CD8-positive, alpha-beta T cell (primary cell): ENCODE measurements at regions of chr2 and their contacts with region 1.

Region 1: GRCh38 chr2:10043906-10044601 is 704 bp downstream of the KLF11 start:
- DNase-seq: peak; percentile 72 to 96 (median 94)
- ATAC-seq: peak; percentile 66
- H3K4me3 ChIP-seq: peak overlapping the region; percentile 40 to 47
- H3K4me3 Mint-ChIP-seq: peak overlapping the region; percentile 77
- H3K27ac ChIP-seq: peak overlapping the region; percentile 67 to 74
- H3K27ac Mint-ChIP-seq: peak overlapping the region; percentile 90
- H3K4me1 ChIP-seq: peaks cover 18% of the 10 kb centered on the region
- H3K4me1 Mint-ChIP-seq: peaks cover 21% of the 10 kb centered on the region
- H3K27me3 ChIP-seq: no peaks in the 10 kb centered on the region
- H3K27me3 Mint-ChIP-seq: no peaks in the 10 kb centered on the region
- CTCF ChIP-seq: no peak

Region 2: DNA sequence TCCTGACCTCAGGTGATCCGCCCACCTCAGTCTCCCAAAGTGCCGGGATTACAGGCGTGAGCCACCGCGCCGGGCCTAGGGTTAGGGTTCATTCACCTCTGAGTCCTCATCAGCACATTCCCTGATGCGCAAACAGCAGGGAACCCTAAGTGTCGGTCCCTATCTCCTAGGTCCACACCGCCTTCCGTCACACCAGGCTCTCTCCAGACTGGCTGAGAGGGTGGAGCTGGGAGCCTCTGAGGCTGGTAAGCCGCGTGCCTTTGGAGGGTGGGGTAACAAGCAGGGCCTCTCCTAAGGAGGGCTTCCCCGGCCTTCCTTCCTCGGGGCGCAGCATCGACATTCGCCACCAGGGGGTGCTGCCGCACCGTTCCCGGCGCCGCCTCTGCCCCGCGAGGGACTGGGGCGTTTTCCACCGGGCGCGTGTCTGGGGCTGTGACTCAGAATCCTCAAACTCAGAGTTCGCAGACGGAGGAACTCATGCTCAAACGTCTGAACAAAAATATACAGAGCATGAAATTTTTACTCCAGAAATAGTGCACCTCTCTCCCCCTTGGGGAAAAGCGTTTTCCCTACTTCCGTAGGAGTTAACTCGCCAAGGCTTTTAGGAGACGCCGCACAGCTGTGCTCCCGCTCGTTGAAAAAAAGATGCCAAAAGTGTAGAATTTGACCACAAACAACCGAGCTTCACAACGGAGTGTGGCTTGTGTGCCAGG is 901.3 kb before region 1 on chr2:
- CTCF ChIA-PET with region 1: no interaction called
- POLR2A ChIA-PET with region 1: no interaction called
- intact Hi-C with region 1: loop called (anchors 5 kb)
- DNase-seq: peak; percentile 57 to 88 (median 75)
- ATAC-seq: peak; percentile 95
- H3K4me3 ChIP-seq: peak overlapping the region in 1 of 2 experiments; percentile 8
- H3K4me3 Mint-ChIP-seq: peak overlapping the region; percentile 39
- H3K27ac ChIP-seq: no peak overlapping the region
- H3K27ac Mint-ChIP-seq: no peak overlapping the region
- H3K4me1 ChIP-seq: peaks cover 3% of the 10 kb centered on the region
- H3K4me1 Mint-ChIP-seq: peaks cover 6% of the 10 kb centered on the region
- H3K27me3 ChIP-seq: no peaks in the 10 kb centered on the region
- H3K27me3 Mint-ChIP-seq: peaks cover 21% of the 10 kb centered on the region
- CTCF ChIP-seq: peak; percentile 90

Region 3: DNA sequence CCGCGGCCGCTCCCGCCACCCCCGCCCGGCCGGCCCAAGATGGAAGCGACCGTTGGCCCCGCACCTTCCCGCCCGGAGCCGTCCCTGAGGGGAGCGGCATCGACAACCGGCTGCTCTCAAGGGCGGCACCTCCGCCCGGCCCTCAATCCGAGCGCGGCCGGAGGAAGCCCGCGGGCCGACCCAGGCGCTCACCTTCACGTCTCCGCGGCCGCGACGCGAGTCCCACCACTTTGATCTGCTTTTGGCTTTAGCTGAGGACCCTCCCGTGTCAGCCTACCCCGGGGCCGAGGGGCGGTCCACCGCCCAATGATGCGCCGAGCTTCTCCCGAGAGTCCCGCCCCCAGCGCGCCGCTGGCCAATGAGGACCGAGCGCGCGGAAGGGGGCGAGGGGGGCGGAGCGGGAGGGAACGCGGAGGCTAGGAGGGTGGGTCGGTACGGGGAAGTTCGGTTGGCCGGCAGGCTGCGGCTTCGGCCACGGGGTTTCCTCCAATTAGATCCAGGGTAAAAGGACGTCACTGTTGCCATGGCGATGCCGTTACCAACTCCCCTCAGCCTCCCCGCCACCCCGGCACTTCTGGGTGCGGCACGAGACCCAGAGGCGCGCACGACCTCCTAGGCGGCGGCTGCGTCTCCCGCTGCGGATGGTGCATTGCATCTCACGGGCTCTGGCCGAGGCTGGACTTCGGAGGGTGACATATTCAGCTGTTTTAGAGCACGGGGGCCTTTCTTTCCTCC is 413.1 kb before region 1 on chr2 and contains the start of gene YWHAQ:
- CTCF ChIA-PET with region 1: no interaction called
- POLR2A ChIA-PET with region 1: interaction called, 4 read pairs
- intact Hi-C with region 1: loop called (anchors 2 to 5 kb)
- DNase-seq: peak; percentile 95 to 100 (median 97)
- ATAC-seq: peak; percentile 90
- H3K4me3 ChIP-seq: peak within 1 kb of the TSS; percentile 90 to 93
- H3K4me3 Mint-ChIP-seq: peak within 1 kb of the TSS; percentile 93
- H3K27ac ChIP-seq: peak within 1 kb of the TSS; percentile 89 to 91
- H3K27ac Mint-ChIP-seq: peak within 1 kb of the TSS; percentile 94
- H3K4me1 ChIP-seq: peaks cover 37% of the 10 kb centered on the region
- H3K4me1 Mint-ChIP-seq: peaks cover 46% of the 10 kb centered on the region
- H3K27me3 ChIP-seq: no peaks in the 10 kb centered on the region
- H3K27me3 Mint-ChIP-seq: no peaks in the 10 kb centered on the region
- CTCF ChIP-seq: no peak
- total RNA-seq, gene YWHAQ: 115 to 123 TPM

Region 4: DNA sequence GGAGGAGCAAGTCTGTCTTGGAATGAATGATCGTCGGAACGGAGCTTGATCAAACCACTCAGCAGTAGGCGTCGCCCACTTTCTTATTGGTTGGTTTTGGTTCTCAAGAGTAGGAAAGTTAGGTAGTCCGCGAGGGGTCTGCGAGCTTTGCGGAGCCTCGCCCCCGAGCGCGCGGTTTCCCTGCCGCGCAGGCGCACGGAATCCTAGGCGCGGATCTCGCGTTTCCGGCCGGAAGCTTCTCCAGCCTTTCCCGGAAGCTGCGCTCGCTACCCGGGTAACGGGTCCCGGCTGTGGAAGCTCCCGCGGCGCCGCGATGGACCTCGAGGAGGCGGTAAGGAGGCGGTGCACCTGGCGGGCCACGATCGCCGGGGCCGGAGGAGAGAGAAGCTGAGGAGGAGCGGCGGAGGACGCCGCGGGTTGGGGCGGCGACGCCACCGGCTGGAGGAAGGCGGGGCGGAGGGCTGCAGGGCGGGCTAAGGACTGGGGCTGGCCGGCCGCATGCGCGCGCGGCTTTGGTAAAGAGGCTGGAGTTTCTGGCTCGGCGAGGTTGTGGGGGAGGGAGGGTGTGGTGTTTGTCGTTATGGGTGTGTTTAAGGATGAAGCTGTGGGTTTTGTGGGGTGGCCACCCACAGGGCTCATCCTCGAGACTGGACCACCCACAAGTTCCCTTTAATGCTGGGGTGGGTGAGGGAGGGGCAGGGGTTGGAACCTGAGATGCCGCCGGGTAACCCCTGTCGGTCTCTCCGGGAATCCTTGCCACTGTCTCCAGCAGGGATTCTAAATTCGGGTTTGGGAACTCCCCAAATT is 200.6 kb before region 1 on chr2 and contains the start of gene TAF1B:
- CTCF ChIA-PET with region 1: interaction called, 3 read pairs
- POLR2A ChIA-PET with region 1: interaction called, 5 read pairs
- intact Hi-C with region 1: loop called in 1 of 2 experiments (anchors 1 kb)
- DNase-seq: peak; percentile 53 to 93 (median 84)
- ATAC-seq: peak; percentile 84
- H3K4me3 ChIP-seq: peak within 1 kb of the TSS; percentile 71 to 74
- H3K4me3 Mint-ChIP-seq: peak within 1 kb of the TSS; percentile 93
- H3K27ac ChIP-seq: peak within 1 kb of the TSS; percentile 65 to 84
- H3K27ac Mint-ChIP-seq: peak within 1 kb of the TSS; percentile 90
- H3K4me1 ChIP-seq: peaks cover 20% of the 10 kb centered on the region
- H3K4me1 Mint-ChIP-seq: peaks cover 48% of the 10 kb centered on the region
- H3K27me3 ChIP-seq: no peaks in the 10 kb centered on the region
- H3K27me3 Mint-ChIP-seq: no peaks in the 10 kb centered on the region
- CTCF ChIP-seq: no peak
- total RNA-seq, gene TAF1B: 13.3 to 15.8 TPM

Region 5: DNA sequence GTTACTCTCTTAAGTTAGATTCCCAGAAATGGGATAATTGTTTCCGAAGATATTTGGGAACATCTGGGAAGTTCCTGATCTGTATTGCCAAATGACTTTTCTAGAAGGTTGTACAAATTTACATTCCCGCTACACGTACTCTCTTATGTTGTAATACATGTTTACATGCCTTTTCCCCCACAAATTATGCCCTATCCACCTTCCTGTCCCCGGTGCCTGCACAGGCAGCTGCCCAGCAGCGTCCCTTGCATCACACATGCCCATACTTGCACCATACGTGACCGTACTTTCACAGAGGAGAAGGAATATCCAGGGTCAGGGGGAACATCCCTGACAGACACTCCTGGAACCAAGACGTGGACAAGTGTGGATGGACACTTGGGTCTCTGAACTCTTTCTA is 24.9 kb before region 1 on chr2:
- CTCF ChIA-PET with region 1: interaction called, 34 read pairs
- POLR2A ChIA-PET with region 1: no interaction called
- intact Hi-C with region 1: no loop called
- DNase-seq: no peak
- ATAC-seq: no peak
- H3K4me3 ChIP-seq: no peak overlapping the region
- H3K4me3 Mint-ChIP-seq: no peak overlapping the region
- H3K27ac ChIP-seq: no peak overlapping the region
- H3K27ac Mint-ChIP-seq: no peak overlapping the region
- H3K4me1 ChIP-seq: no peaks in the 10 kb centered on the region
- H3K4me1 Mint-ChIP-seq: no peaks in the 10 kb centered on the region
- H3K27me3 ChIP-seq: no peaks in the 10 kb centered on the region
- H3K27me3 Mint-ChIP-seq: peaks cover 11% of the 10 kb centered on the region
- CTCF ChIP-seq: no peak

Region 6: DNA sequence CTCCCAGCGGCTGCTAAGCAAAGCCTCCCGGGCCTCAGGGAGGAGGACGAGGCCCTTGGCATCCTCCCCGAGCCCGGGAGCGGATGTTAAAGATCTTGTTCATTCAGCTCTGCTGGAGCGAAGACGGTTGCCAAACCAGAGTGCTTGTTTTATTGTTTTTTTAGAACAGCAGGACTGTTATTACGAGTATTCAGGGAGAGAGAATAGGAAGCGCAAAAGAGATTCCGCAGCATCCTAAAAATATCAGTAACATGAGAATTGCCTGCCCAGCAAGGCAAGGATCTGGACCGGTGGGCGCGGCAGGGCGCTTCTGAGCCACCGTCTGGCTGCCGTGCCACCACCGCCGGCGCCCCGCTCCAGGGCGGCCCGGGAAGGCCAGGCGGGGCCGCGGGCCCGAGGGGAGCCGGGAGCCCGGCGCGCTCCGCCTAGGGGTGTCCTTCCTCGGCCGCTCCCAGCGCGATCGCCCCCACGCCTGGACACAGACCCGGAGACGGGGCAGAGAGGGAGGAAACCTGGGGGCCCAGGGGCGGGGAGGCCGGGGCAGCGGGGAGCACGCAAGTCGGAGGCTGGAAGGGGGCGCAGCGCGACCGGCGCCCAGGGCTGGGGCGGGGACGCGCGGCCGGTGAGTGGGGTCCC is 35.3 kb after region 1 on chr2:
- CTCF ChIA-PET with region 1: interaction called, 3 read pairs
- POLR2A ChIA-PET with region 1: no interaction called
- intact Hi-C with region 1: loop called in 1 of 2 experiments (anchors 1 kb)
- DNase-seq: peak in 3 of 9 experiments; percentile 12 to 40 (median 31)
- ATAC-seq: peak; percentile 28
- H3K4me3 ChIP-seq: peak overlapping the region in 1 of 2 experiments; percentile 1
- H3K4me3 Mint-ChIP-seq: peak overlapping the region; percentile 84
- H3K27ac ChIP-seq: no peak overlapping the region
- H3K27ac Mint-ChIP-seq: no peak overlapping the region
- H3K4me1 ChIP-seq: peaks cover 22% of the 10 kb centered on the region
- H3K4me1 Mint-ChIP-seq: peaks cover 9% of the 10 kb centered on the region
- H3K27me3 ChIP-seq: peaks cover 21 to 34% of the 10 kb centered on the region in 2 experiments
- H3K27me3 Mint-ChIP-seq: peaks cover 69% of the 10 kb centered on the region
- CTCF ChIP-seq: no peak

Region 7: DNA sequence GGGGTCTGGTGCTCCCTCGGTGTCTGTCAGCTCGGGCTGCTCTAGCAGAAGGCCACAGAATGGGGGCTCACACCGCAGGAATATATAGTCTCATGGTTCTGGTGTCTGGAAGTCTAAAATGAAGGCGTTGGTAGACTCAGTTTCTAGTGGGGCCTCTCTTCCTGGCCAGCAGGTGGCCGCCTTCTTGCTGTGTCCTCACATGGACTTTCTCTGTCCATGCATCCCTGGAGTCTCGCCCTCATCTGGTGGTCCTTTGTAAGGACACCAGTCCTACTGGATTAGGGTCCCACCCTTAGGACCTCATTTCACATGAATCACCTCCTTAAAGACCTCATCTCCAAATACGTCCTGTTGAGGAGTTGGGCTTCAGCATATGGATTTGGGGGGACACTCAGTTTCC is 144.2 kb after region 1 on chr2:
- CTCF ChIA-PET with region 1: no interaction called
- POLR2A ChIA-PET with region 1: no interaction called
- intact Hi-C with region 1: no loop called
- DNase-seq: no peak
- ATAC-seq: no peak
- H3K4me3 ChIP-seq: no peak overlapping the region
- H3K4me3 Mint-ChIP-seq: no peak overlapping the region
- H3K27ac ChIP-seq: no peak overlapping the region
- H3K27ac Mint-ChIP-seq: no peak overlapping the region
- H3K4me1 ChIP-seq: no peaks in the 10 kb centered on the region
- H3K4me1 Mint-ChIP-seq: no peaks in the 10 kb centered on the region
- H3K27me3 ChIP-seq: no peaks in the 10 kb centered on the region
- H3K27me3 Mint-ChIP-seq: no peaks in the 10 kb centered on the region
- CTCF ChIP-seq: no peak

Region 8: GRCh38 chr2:10448208-10448645 is 404.2 kb after region 1 on chr2 and contains the start of gene ODC1:
- CTCF ChIA-PET with region 1: interaction called, 4 read pairs
- POLR2A ChIA-PET with region 1: interaction called, 4 read pairs
- intact Hi-C with region 1: loop called in 1 of 2 experiments (anchors 1 kb)
- DNase-seq: peak; percentile 96 to 100 (median 98)
- ATAC-seq: peak; percentile 81
- H3K4me3 ChIP-seq: peak within 1 kb of the TSS; percentile 61 to 83
- H3K4me3 Mint-ChIP-seq: peak within 1 kb of the TSS; percentile 85
- H3K27ac ChIP-seq: peak within 1 kb of the TSS; percentile 87 to 97
- H3K27ac Mint-ChIP-seq: peak within 1 kb of the TSS; percentile 88
- H3K4me1 ChIP-seq: peaks cover 23% of the 10 kb centered on the region
- H3K4me1 Mint-ChIP-seq: peaks cover 39% of the 10 kb centered on the region
- H3K27me3 ChIP-seq: no peaks in the 10 kb centered on the region
- H3K27me3 Mint-ChIP-seq: no peaks in the 10 kb centered on the region
- CTCF ChIP-seq: no peak
- total RNA-seq, gene ODC1: 157 to 162 TPM